Ascending aorta (tissue), 2 donors: ENCODE measurements at regions of chr5 and their contacts with region 1.

Region 1: DNA sequence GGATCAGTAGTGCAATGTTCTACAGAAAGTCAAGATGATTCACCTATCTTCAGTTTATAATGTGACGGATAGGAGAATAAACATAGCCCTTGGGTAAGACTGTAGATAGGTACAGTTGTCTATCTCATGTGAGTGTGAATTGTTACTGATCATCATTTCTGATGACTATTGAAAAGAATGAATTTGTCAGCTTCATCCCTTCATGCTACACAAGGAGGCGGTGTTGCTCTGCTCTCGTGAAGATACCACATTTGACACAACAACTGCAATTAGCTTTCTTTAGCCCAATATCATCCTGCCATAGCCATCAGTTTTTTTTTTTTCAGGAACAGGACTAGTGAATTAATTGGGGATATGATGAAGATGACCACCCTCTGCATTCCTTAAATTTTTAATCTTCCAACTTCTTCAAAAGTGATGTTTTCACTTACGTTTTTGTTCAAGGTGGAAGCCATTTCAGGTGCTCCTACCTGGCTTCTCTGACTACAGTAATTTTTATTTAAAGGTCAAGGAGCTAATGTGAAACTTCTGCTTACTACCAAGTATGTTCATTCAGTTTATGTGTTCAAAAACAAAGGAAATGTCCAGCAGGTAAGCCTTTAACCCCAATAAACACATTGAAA is 152.9 kb upstream of the MOCS2 start:
- DNase-seq: no peak
- H3K4me3 ChIP-seq: no peak overlapping the region
- H3K27ac ChIP-seq: no peak overlapping the region
- H3K4me1 ChIP-seq: no peaks in the 10 kb centered on the region
- H3K27me3 ChIP-seq: no peaks in the 10 kb centered on the region
- CTCF ChIP-seq: peak in 2 of 3 experiments; percentile 13 to 48

Region 2: GRCh38 chr5:53180991-53181390 is 81.5 kb before region 1 on chr5:
- intact Hi-C with region 1: no loop called
- DNase-seq: no peak
- H3K4me3 ChIP-seq: no peak overlapping the region
- H3K27ac ChIP-seq: no peak overlapping the region
- H3K4me1 ChIP-seq: no peaks in the 10 kb centered on the region
- H3K27me3 ChIP-seq: no peaks in the 10 kb centered on the region
- CTCF ChIP-seq: no peak

Region 3: DNA sequence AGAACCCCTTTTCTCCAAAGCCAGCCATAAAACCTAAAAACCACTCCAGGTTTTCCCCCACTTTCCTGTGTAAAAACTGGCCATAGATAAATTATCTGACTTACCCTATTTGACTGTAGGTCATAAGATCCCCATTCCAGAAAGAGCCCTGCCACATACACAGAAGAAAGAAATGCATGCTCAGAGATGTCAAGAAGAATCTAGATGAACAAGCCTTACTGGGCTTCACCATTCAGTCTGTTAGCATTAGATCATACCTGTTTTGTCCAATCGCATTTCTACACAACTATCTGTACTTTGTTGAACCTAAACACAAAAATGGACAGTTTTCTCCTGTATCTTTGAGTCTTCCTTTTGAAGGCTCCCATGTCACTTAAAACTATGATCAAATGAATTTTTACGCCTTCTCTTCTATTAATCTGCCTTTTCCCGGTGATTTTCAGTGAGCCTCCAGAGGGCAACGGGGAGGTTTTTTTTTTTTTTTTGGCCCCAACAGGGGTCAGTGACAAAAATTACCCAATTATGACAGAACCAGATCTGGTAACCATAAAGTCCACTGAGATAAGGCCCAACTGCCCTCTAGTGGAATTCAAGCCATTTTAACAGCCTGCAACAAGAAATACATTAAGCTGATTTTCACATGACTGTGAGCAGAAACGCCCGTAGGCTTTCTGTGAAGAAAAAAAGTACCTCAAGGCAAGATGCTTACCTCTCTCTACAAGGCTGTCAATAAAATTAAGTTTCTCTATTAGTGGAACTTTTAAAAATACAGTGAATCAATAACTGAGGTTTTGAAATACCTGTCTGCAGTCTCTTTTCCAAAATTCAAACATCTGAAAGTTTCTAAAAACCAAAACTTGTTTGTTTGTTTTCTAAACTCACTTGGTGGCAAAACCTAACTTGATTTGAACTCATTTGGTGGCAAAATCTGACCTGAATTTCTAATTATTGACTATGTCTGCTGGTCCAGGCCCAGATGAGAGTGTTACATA is 168.1 kb after region 1 on chr5:
- intact Hi-C with region 1: loop called (anchors 1 kb)
- DNase-seq: no peak
- H3K4me3 ChIP-seq: no peak overlapping the region
- H3K27ac ChIP-seq: no peak overlapping the region
- H3K4me1 ChIP-seq: no peaks in the 10 kb centered on the region
- H3K27me3 ChIP-seq: no peaks in the 10 kb centered on the region
- CTCF ChIP-seq: peak; percentile 42 to 62 (median 45)

Region 4: DNA sequence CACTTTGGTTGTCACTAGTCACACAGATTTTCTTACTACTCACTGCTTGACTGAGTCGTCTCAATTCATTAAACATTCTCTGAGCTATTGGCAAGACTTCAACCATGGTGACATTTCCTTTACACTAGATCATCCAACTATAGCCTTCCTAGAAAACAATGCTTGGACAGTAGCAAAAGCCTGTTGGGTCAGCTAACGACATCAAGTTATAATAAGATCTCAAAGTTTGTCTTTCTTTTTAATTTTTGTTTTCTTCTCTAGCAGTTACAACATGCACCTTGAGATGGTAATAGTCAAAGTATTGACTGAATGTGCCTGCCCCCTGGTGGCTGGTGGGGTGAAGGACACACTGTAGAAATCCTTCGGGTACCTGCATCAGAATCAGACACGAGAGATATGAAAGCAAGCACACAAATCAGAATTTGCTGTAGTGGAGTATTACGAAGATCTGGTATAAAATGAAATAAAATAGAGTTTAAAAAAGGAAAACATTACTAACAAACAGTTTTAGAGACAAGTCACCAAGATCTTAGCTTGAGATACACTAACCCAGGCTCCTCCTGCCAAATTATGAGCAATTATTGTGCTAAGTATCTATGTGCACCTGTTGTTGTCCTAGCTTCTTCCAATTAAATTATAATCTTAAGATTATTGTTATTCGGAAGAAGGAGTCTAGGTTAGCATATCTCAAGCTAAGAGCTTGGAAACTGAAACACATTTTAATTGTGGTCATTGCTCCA is 966.8 kb after region 1 on chr5:
- intact Hi-C with region 1: loop called (anchors 10 kb)
- DNase-seq: peak in 1 of 2 donors; percentile 74
- H3K4me3 ChIP-seq: no peak overlapping the region
- H3K27ac ChIP-seq: no peak overlapping the region
- H3K4me1 ChIP-seq: no peaks in the 10 kb centered on the region
- H3K27me3 ChIP-seq: no peaks in the 10 kb centered on the region
- CTCF ChIP-seq: peak; percentile 70 to 85 (median 83)